GM12878 (cell line): ENCODE measurements at regions of chr7 and their contacts with region 1.

Region 1: GRCh38 chr7:38195804-38196595 is 18.0 kb downstream of the STARD3NL start:
- DNase-seq: no peak
- ATAC-seq: peak; percentile 40; the same call in 1 of the 3 replicates
- H3K4me3 ChIP-seq: no peak overlapping the region
- H3K27ac ChIP-seq: no peak overlapping the region
- H3K4me1 ChIP-seq: no peaks in the 10 kb centered on the region
- H3K27me3 ChIP-seq: no peaks in the 10 kb centered on the region
- CTCF ChIP-seq: no peak
- EP300 ChIP-seq: no peak
- POLR2A ChIP-seq: no peak
- RAD21 ChIP-seq: no peak

Region 2: GRCh38 chr7:37893359-37893758 is 302.6 kb before region 1 on chr7:
- CTCF ChIA-PET with region 1: no interaction called
- POLR2A ChIA-PET with region 1: no interaction called
- RAD21 ChIA-PET with region 1: no interaction called
- SMC1A ChIA-PET with region 1: no interaction called
- in situ Hi-C with region 1: no loop called
- intact Hi-C with region 1: no loop called
- DNase-seq: no peak
- ATAC-seq: no peak
- H3K4me3 ChIP-seq: no peak overlapping the region
- H3K27ac ChIP-seq: no peak overlapping the region
- H3K4me1 ChIP-seq: no peaks in the 10 kb centered on the region
- H3K27me3 ChIP-seq: no peaks in the 10 kb centered on the region
- CTCF ChIP-seq: no peak
- EP300 ChIP-seq: no peak
- POLR2A ChIP-seq: no peak
- RAD21 ChIP-seq: no peak

Region 3: GRCh38 chr7:38169847-38170246 is 26.2 kb before region 1 on chr7:
- CTCF ChIA-PET with region 1: no interaction called
- POLR2A ChIA-PET with region 1: interaction called, 3 read pairs
- RAD21 ChIA-PET with region 1: interaction called, 9 read pairs
- SMC1A ChIA-PET with region 1: interaction called, 11 read pairs
- in situ Hi-C with region 1: no loop called
- intact Hi-C with region 1: no loop called
- DNase-seq: peak; percentile 85
- ATAC-seq: peak; percentile 82
- H3K4me3 ChIP-seq: 0 out of 2 replicates have a peak overlapping the region, but pooled peaks have one; percentile 6
- H3K27ac ChIP-seq: peak overlapping the region; percentile 57
- H3K4me1 ChIP-seq: peaks cover 34% of the 10 kb centered on the region
- H3K27me3 ChIP-seq: no peaks in the 10 kb centered on the region
- CTCF ChIP-seq: no peak
- EP300 ChIP-seq: peak; percentile 38 to 83; a peak in 3 of 4 replicates
- POLR2A ChIP-seq: no peak
- RAD21 ChIP-seq: no peak

Region 4: DNA sequence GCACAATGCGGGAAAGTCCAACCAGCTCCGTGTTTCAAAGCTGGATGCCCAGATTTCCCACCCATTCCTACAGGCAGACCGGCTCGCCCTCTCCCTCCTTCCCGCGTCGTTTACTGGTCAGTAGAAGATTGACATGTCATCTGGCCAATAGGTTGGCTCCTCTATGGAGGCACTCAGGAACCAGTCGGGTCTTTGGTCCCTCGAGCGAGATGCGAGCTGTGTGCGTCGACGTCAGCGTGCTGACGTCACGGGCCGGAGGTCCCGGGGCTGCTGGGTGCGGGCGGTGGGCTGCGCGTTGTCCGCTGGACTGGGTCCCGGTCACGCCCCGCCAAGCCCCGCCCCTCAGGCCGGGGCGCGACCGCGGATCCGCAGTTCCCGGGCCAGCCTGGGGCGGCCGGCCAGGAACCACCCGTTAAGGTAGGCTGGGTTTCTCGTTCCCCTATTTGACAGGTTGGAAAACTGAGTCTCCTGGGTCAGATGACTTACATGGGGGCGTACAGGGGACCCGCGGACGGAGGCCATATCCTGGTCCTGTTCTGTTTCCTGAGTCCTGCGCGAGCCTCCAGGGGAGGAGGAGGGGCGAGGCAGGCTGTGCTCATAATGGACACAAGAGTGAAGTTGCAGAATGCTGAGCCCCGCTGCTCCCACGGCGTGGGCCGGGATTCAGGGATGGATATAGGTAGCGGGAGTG is 17.9 kb before region 1 on chr7 and contains the start of gene STARD3NL:
- CTCF ChIA-PET with region 1: interaction called, 18 read pairs
- POLR2A ChIA-PET with region 1: interaction called, 5 read pairs
- RAD21 ChIA-PET with region 1: interaction called, 5 read pairs
- SMC1A ChIA-PET with region 1: interaction called, 61 read pairs
- in situ Hi-C with region 1: no loop called
- intact Hi-C with region 1: no loop called
- DNase-seq: peak; percentile 100
- ATAC-seq: peak; percentile 94
- H3K4me3 ChIP-seq: peak within 1 kb of the TSS; percentile 91
- H3K27ac ChIP-seq: peak within 1 kb of the TSS; percentile 90
- H3K4me1 ChIP-seq: no peaks in the 10 kb centered on the region
- H3K27me3 ChIP-seq: no peaks in the 10 kb centered on the region
- CTCF ChIP-seq: no peak
- EP300 ChIP-seq: no peak
- POLR2A ChIP-seq: peak; percentile 78
- RAD21 ChIP-seq: no peak
- polyA plus RNA-seq, gene STARD3NL: 76.4 to 101 TPM

Region 5: GRCh38 chr7:38248069-38248567 is 52.1 kb after region 1 on chr7:
- CTCF ChIA-PET with region 1: no interaction called
- POLR2A ChIA-PET with region 1: no interaction called
- RAD21 ChIA-PET with region 1: no interaction called
- SMC1A ChIA-PET with region 1: no interaction called
- in situ Hi-C with region 1: no loop called
- intact Hi-C with region 1: no loop called
- DNase-seq: no peak
- ATAC-seq: no peak
- H3K4me3 ChIP-seq: no peak overlapping the region
- H3K27ac ChIP-seq: no peak overlapping the region
- H3K4me1 ChIP-seq: no peaks in the 10 kb centered on the region
- H3K27me3 ChIP-seq: no peaks in the 10 kb centered on the region
- CTCF ChIP-seq: no peak
- EP300 ChIP-seq: no peak
- POLR2A ChIP-seq: no peak
- RAD21 ChIP-seq: no peak

Region 6: DNA sequence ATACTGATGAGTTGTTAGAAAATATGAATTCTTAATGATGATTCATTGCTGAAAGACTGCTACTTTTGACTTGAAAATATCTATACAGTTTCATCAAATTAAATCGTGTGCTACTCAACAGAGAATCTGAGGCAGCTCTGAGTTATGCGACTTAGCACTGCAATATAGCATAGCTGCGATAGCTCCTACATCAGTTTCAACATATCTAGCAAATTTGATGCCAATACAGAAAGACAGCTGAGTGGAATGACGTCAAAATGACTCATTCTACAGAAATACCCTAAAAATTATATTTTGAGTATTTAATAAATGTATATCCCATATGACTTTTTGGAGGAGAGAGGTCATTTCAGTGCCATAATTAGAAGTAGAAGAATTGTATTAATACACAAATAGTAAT is 78.5 kb after region 1 on chr7:
- CTCF ChIA-PET with region 1: no interaction called
- POLR2A ChIA-PET with region 1: no interaction called
- RAD21 ChIA-PET with region 1: no interaction called
- SMC1A ChIA-PET with region 1: no interaction called
- in situ Hi-C with region 1: no loop called
- intact Hi-C with region 1: no loop called
- DNase-seq: no peak
- ATAC-seq: no peak
- H3K4me3 ChIP-seq: no peak overlapping the region
- H3K27ac ChIP-seq: no peak overlapping the region
- H3K4me1 ChIP-seq: peaks cover 6% of the 10 kb centered on the region; the same call in 1 of the 2 replicates
- H3K27me3 ChIP-seq: no peaks in the 10 kb centered on the region
- CTCF ChIP-seq: no peak
- EP300 ChIP-seq: no peak
- POLR2A ChIP-seq: no peak
- RAD21 ChIP-seq: no peak